Ascending aorta (tissue), 2 donors: ENCODE measurements at regions of chrX and their contacts with region 1.

Region 1: GRCh38 chrX:25144043-25144940 is 128.5 kb upstream of the ARX start:
- DNase-seq: peak in 1 of 2 donors; percentile 73
- H3K4me3 ChIP-seq: peak overlapping the region; percentile 16 to 23
- H3K27ac ChIP-seq: no peak overlapping the region
- H3K4me1 ChIP-seq: no peaks in the 10 kb centered on the region
- H3K27me3 ChIP-seq: no peaks in the 10 kb centered on the region
- CTCF ChIP-seq: peak; percentile 33 to 74 (median 52)

Region 2: DNA sequence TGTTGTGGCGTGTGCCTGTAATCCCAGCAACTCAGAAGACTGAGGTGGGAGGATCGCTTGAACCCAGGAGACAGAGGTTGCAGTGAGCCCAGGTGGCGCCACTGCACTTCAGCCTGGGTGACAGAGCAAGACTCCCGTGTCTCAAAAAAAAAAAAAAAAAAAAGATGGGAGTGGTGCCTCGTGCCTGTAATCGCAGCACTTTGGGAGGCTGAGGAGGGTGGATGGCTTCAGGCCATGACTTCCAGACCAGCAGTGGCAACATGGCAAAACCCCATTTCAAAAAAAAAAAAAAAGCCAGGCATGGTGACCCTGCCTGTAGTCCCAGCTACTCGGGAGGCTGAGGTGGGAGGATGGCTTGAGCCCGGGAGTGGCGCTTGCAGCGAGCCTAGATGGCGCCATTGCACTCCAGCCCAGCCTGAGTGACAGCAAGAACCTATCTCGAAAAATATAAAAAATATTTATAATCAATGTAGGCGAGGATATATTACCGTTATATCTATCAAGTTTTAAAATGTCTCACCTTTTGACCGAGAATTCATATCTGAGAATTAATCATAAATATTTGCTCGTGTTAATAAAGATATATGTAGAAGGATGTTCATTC is 1062.5 kb before region 1 on chrX:
- intact Hi-C with region 1: loop called (anchors 10 kb)
- DNase-seq: peak in 1 of 2 donors; percentile 70
- H3K4me3 ChIP-seq: no peak overlapping the region
- H3K27ac ChIP-seq: no peak overlapping the region
- H3K4me1 ChIP-seq: no peaks in the 10 kb centered on the region
- H3K27me3 ChIP-seq: no peaks in the 10 kb centered on the region
- CTCF ChIP-seq: peak in 2 of 3 experiments; percentile 44 to 45

Region 3: GRCh38 chrX:24676403-24677024 is 467.8 kb before region 1 on chrX:
- intact Hi-C with region 1: loop called (anchors 5 kb)
- DNase-seq: no peak
- H3K4me3 ChIP-seq: no peak overlapping the region
- H3K27ac ChIP-seq: no peak overlapping the region
- H3K4me1 ChIP-seq: no peaks in the 10 kb centered on the region
- H3K27me3 ChIP-seq: no peaks in the 10 kb centered on the region
- CTCF ChIP-seq: peak in 2 of 3 experiments; percentile 34 to 55

Region 4: GRCh38 chrX:24838629-24839028 is 305.7 kb before region 1 on chrX:
- intact Hi-C with region 1: loop called (anchors 2 kb)
- DNase-seq: no peak
- H3K4me3 ChIP-seq: no peak overlapping the region
- H3K27ac ChIP-seq: no peak overlapping the region
- H3K4me1 ChIP-seq: no peaks in the 10 kb centered on the region
- H3K27me3 ChIP-seq: no peaks in the 10 kb centered on the region
- CTCF ChIP-seq: peak in 2 of 3 experiments; percentile 49 to 54

Region 5: DNA sequence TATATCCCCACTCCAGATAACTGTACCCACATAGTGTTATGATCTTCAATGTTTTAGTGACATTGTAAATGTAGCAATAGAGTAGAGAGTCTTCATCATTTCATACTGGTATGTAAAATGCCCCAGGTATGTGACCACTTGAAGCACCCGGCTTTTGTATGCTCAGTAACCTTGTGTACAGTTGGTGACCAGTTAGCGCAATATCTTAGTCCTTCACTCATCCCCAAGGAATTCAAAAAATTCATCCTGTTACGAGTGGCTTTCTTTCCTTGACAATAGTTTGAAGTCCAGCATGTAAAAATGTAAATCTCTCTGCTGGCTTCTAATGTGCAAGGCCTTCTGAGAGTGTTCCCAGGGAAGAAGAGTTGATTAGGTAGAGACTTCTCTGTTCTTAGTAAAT is 274.1 kb before region 1 on chrX:
- intact Hi-C with region 1: no loop called
- DNase-seq: no peak
- H3K4me3 ChIP-seq: no peak overlapping the region
- H3K27ac ChIP-seq: no peak overlapping the region
- H3K4me1 ChIP-seq: no peaks in the 10 kb centered on the region
- H3K27me3 ChIP-seq: no peaks in the 10 kb centered on the region
- CTCF ChIP-seq: no peak

Region 6: DNA sequence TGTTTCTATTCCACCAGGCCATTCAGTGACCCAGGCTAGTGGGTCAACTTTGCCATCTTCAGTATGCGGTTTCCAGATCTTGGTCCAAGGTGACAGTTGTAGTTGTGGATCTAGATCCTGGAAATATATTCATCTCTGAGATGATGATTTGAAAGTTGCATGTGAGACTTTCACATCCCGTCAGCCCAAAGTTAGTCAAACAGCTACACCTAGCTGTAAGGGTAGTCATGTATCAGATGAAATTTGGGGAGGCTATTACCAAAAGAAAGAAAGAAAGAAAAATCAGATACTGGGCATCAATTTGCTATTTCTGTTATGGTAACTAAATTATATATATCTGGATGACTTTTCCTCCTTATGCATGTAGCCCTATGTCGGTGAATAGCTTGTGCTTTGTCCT is 130.9 kb after region 1 on chrX:
- intact Hi-C with region 1: no loop called
- DNase-seq: no peak
- H3K4me3 ChIP-seq: no peak overlapping the region
- H3K27ac ChIP-seq: no peak overlapping the region
- H3K4me1 ChIP-seq: no peaks in the 10 kb centered on the region
- H3K27me3 ChIP-seq: no peaks in the 10 kb centered on the region
- CTCF ChIP-seq: no peak